CD8-positive, alpha-beta T cell (primary cell): ENCODE measurements at regions of chr19 and their contacts with region 1.

Region 1: DNA sequence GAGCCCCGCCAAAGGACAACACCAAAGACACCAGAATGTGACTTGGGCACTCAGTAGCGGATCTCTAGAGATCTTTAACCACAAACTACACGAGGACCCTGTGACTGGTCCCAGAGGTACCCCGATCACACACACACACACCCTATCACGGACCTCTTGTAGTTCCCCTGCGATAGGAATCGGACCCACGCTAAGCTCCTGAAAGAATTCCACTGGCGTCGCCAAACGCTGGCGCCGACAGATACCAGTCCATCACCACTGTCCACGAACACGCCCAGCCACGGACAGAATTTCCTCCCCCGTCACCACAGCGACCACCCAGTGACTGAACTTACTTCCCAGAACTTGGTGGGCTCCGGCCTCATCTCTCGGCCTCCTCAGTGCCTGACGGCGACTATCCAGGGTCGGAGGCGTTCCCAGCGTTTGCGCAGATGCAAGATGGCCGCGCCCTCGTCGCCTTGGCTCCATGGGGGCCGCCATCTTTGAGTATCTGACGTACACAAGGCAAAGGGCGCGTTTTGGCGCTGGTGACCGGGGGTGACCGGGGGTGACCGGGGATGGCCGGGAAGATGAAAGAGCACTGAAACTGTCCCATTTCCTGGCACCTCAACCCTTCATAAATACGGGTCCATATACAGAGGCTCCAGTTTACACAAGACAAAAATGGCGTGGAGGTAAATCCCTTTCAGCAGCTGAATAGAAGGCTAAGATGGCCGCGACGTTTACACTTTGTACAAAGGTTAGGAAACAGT is at the start of gene ZNF615:
- DNase-seq: peak; percentile 76 to 95 (median 89)
- ATAC-seq: peak; percentile 92
- H3K4me3 ChIP-seq: peak within 1 kb of the TSS; percentile 81 to 97
- H3K4me3 Mint-ChIP-seq: peak within 1 kb of the TSS; percentile 98
- H3K27ac ChIP-seq: peak within 1 kb of the TSS; percentile 78 to 89
- H3K27ac Mint-ChIP-seq: peak within 1 kb of the TSS; percentile 95
- H3K4me1 ChIP-seq: peaks cover 4% of the 10 kb centered on the region
- H3K4me1 Mint-ChIP-seq: peaks cover 21% of the 10 kb centered on the region
- H3K27me3 ChIP-seq: no peaks in the 10 kb centered on the region
- H3K27me3 Mint-ChIP-seq: no peaks in the 10 kb centered on the region
- CTCF ChIP-seq: no peak
- total RNA-seq, gene ZNF615: 14.7 to 17.2 TPM

Region 2: DNA sequence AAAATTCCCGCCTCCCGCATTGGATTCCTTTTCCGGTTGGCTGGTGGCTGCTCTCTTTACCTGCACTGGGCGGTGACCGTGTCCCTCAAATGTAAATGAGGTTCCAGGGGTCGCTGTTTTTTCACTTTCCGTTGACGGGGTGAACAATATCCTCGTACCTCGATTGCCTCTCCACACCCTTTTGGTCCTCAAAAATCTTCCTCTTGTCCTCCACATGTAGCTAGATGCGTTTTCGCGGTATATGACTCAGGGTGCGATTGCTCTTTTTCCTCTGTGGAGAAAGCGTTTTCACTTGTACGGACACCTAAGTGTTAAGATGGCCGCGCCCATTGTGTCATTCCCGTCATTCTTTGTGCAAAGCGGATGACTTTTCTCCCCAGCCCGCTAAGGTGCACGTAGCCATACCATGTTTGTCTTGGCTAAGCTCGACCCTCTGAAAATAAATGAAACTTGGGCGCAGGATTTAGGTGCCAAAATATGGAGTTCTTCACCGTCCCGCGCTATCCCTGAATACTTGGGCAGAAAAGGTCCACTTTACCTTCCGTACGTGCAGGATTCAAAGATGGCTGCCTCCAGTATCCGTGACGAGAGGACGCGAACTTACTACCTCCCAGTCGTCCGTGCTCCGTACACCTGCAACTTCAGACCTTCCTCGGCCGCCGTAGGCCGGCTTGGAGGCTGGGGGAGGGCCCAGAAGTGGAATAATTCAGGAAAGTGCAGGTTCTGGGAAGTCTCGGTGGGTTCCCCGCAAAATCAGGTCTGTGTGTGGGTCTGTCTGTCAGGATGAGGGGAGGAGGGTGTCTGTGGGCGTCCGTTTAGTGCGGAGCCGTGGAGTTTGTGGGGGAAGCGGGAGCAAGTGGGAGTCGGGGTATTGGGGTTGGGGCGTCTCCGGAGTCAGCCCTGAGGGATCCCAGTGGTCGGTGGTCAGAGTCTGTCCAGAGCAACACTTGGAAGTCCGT is 80.9 kb before region 1 on chr19 and contains the start of gene ZNF613:
- CTCF ChIA-PET with region 1: no interaction called
- POLR2A ChIA-PET with region 1: no interaction called
- intact Hi-C with region 1: loop called (anchors 1 to 5 kb)
- DNase-seq: peak; percentile 63 to 92 (median 85)
- ATAC-seq: peak; percentile 86
- H3K4me3 ChIP-seq: peak within 1 kb of the TSS; percentile 88 to 95
- H3K4me3 Mint-ChIP-seq: peak within 1 kb of the TSS; percentile 95
- H3K27ac ChIP-seq: peak within 1 kb of the TSS; percentile 55 to 65
- H3K27ac Mint-ChIP-seq: peak within 1 kb of the TSS; percentile 91
- H3K4me1 ChIP-seq: peaks cover 7% of the 10 kb centered on the region
- H3K4me1 Mint-ChIP-seq: peaks cover 23% of the 10 kb centered on the region
- H3K27me3 ChIP-seq: no peaks in the 10 kb centered on the region
- H3K27me3 Mint-ChIP-seq: no peaks in the 10 kb centered on the region
- CTCF ChIP-seq: no peak
- total RNA-seq, gene ZNF613: 0.58 to 1.1 TPM

Region 3: GRCh38 chr19:51986309-51987291 is 21.4 kb before region 1 on chr19 and contains the start of gene ZNF350:
- CTCF ChIA-PET with region 1: no interaction called
- POLR2A ChIA-PET with region 1: interaction called, 3 read pairs
- intact Hi-C with region 1: loop called (anchors 1 kb)
- DNase-seq: peak; percentile 74 to 96 (median 88)
- ATAC-seq: peak; percentile 99
- H3K4me3 ChIP-seq: peak within 1 kb of the TSS; percentile 85 to 92
- H3K4me3 Mint-ChIP-seq: peak within 1 kb of the TSS; percentile 96
- H3K27ac ChIP-seq: peak within 1 kb of the TSS; percentile 71 to 77
- H3K27ac Mint-ChIP-seq: peak within 1 kb of the TSS; percentile 95
- H3K4me1 ChIP-seq: peaks cover 5% of the 10 kb centered on the region
- H3K4me1 Mint-ChIP-seq: peaks cover 21% of the 10 kb centered on the region
- H3K27me3 ChIP-seq: no peaks in the 10 kb centered on the region
- H3K27me3 Mint-ChIP-seq: no peaks in the 10 kb centered on the region
- CTCF ChIP-seq: no peak
- total RNA-seq, gene ZNF350: 48.1 to 50.8 TPM

Region 4: GRCh38 chr19:52028027-52028779 is 20.2 kb after region 1 on chr19 and contains the start of gene ZNF614:
- CTCF ChIA-PET with region 1: no interaction called
- POLR2A ChIA-PET with region 1: interaction called, 5 read pairs
- intact Hi-C with region 1: loop called (anchors 1 kb)
- DNase-seq: peak; percentile 74 to 92 (median 85)
- ATAC-seq: peak; percentile 86
- H3K4me3 ChIP-seq: peak within 1 kb of the TSS; percentile 92 to 93
- H3K4me3 Mint-ChIP-seq: peak within 1 kb of the TSS; percentile 98
- H3K27ac ChIP-seq: peak within 1 kb of the TSS; percentile 93 to 94
- H3K27ac Mint-ChIP-seq: peak within 1 kb of the TSS; percentile 99
- H3K4me1 ChIP-seq: peaks cover 10% of the 10 kb centered on the region
- H3K4me1 Mint-ChIP-seq: peaks cover 30% of the 10 kb centered on the region
- H3K27me3 ChIP-seq: no peaks in the 10 kb centered on the region
- H3K27me3 Mint-ChIP-seq: no peaks in the 10 kb centered on the region
- CTCF ChIP-seq: no peak
- total RNA-seq, gene ZNF614: 10.6 to 11.4 TPM

Region 5: GRCh38 chr19:53879140-53880081 is 1871.4 kb after region 1 on chr19:
- CTCF ChIA-PET with region 1: no interaction called
- POLR2A ChIA-PET with region 1: no interaction called
- intact Hi-C with region 1: loop called in 1 of 2 experiments (anchors 10 kb)
- DNase-seq: peak; percentile 70 to 89 (median 79)
- ATAC-seq: peak; percentile 80
- H3K4me3 ChIP-seq: peak overlapping the region; percentile 53 to 55
- H3K4me3 Mint-ChIP-seq: no peak overlapping the region
- H3K27ac ChIP-seq: no peak overlapping the region
- H3K27ac Mint-ChIP-seq: no peak overlapping the region
- H3K4me1 ChIP-seq: peaks cover 76% of the 10 kb centered on the region
- H3K4me1 Mint-ChIP-seq: peaks cover 50% of the 10 kb centered on the region
- H3K27me3 ChIP-seq: peaks cover 36 to 39% of the 10 kb centered on the region in 2 experiments
- H3K27me3 Mint-ChIP-seq: peaks cover 11% of the 10 kb centered on the region
- CTCF ChIP-seq: no peak